A673 (cell line): ENCODE measurements at regions of chr4 and their contacts with region 1.

Region 1: DNA sequence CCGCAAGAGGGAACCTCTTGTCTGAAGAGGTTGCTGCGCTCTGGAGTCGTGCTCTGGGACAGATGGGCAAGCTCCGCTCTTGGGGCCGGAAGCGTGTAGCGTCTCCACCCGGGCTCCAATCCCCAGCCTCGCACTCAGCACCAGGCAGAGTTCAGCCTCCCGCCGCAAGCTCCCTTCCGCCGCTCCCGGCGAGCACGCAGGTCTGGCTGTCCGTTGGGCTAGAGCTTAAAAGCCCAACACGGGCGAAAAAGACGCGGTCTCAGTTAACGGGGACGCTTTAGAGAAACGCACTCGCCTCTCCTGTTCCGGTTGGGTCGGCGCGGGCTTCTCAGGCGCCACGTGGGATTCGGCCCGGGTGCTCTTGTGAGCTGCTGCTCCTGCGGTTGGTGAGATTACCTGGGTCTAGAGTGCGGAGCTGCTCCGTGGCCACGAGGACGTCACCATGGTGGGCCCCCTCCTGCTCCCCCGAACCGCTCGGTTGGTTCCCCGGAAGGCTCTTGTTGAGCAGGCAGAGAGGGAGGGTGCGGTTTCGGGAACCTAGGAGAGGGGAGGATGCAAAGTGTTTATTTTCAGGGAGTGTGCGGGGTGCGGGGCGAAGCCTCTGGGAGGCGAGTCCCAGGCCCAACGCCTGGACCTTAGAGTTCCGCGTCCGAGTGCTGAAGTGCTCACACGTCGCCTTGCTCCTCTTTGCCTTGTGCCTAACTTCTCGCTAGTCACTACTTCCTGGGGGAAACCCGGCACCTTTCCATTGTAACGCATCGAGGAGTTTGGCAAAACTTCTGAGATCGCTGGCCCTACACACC is at the start of gene TMA16:
- DNase-seq: peak; percentile 97
- H3K4me3 ChIP-seq: peak within 1 kb of the TSS; percentile 90
- H3K27ac ChIP-seq: peak within 1 kb of the TSS; percentile 98
- H3K4me1 ChIP-seq: peaks cover 3% of the 10 kb centered on the region
- H3K27me3 ChIP-seq: no peaks in the 10 kb centered on the region
- CTCF ChIP-seq: no peak
- total RNA-seq, gene TMA16: 83.5 and 84.8 TPM in 2 replicates

Region 2: GRCh38 chr4:163148466-163149336 is 345.9 kb before region 1 on chr4:
- CTCF ChIA-PET with region 1: no interaction called
- POLR2A ChIA-PET with region 1: no interaction called
- intact Hi-C with region 1: no loop called
- DNase-seq: no peak
- H3K4me3 ChIP-seq: no peak overlapping the region
- H3K27ac ChIP-seq: no peak overlapping the region
- H3K4me1 ChIP-seq: peaks cover 8% of the 10 kb centered on the region
- H3K27me3 ChIP-seq: no peaks in the 10 kb centered on the region
- CTCF ChIP-seq: no peak

Region 3: DNA sequence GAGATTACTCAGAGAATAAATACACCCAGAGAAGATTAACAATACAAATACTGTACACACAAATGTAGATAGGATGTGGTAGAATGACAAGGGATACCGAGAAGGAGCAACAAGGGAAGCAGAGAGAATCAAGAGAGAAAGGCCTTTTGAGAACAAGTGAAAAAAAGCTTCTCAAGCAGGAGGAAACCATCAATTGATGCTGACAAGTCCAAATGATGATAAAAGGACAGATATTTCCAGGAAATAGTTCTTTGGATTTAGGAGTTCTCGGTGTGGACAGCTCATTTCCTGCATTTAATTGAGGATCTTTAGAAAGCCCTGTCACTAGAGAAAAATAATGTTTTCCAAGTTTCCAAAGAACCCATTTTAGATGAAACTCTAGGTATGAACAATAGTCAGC is 102.8 kb before region 1 on chr4:
- CTCF ChIA-PET with region 1: no interaction called
- POLR2A ChIA-PET with region 1: no interaction called
- intact Hi-C with region 1: loop called (anchors 2 kb)
- DNase-seq: peak; percentile 73
- H3K4me3 ChIP-seq: no peak overlapping the region
- H3K27ac ChIP-seq: peak overlapping the region; percentile 65
- H3K4me1 ChIP-seq: peaks cover 32% of the 10 kb centered on the region
- H3K27me3 ChIP-seq: no peaks in the 10 kb centered on the region
- CTCF ChIP-seq: no peak